ENCODE measurements at regions of chr4 and their contacts with region 1.

Region 1: DNA sequence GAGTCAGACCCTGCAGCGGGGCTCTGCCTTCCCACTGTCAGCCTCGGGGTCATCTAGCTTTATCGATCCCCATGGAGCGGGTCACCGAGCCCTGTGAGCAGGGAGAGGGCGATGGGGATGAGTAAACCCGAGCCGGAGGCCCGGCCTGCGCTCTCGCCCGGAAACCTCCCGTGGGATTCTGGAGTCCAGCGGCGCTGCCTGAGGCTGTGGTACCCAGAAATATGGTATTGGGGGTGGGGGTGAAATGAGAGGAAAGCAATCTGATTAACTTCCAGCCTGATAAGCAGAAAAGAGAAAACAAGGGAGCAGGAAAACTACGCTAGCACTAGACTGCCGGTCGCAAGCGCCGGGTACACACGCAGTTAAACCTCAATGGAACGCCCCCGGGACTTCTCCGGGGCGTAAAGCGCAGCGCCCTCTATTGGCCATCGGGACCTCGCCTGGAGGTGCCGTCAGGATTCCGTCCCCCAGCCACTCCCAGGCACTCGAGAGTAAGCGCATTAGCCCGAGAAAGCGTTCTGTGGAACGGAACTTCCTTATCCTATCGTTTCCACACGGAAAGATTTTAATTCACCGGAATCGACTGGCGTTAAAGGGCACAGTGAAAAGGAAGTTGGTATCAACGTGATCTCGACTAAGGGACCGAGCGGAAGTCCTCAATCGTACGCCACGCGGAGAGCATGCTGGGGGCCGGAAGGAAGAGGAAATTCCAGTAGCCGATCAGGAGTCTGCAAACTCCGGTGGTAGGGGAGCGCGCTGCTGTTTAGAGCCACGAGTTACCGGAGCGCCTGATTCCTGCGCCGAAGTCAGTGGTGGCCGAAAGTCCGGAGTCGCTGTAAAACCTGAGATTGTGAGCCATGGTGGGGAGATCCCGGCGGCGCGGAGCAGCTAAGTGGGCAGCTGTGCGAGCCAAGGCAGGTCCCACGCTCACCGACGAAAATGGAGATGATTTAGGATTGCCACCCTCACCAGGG is at the start of gene UTP3:
- DNase-seq: peak; percentile 97
- H3K4me3 Mint-ChIP-seq: peak within 1 kb of the TSS; percentile 99
- H3K27ac Mint-ChIP-seq: peak within 1 kb of the TSS; percentile 96
- H3K4me1 Mint-ChIP-seq: peaks cover 28% of the 10 kb centered on the region
- H3K27me3 Mint-ChIP-seq: peaks cover 1% of the 10 kb centered on the region
- total RNA-seq, gene UTP3: 45.9 and 47.6 TPM in 2 replicates

Region 2: GRCh38 chr4:70591955-70592582 is 96.0 kb before region 1 on chr4 and contains the start of gene AMBN:
- intact Hi-C with region 1: no loop called
- DNase-seq: no peak
- H3K4me3 Mint-ChIP-seq: no peak within 1 kb of the TSS
- H3K27ac Mint-ChIP-seq: no peak within 1 kb of the TSS
- H3K4me1 Mint-ChIP-seq: no peaks in the 10 kb centered on the region
- H3K27me3 Mint-ChIP-seq: no peaks in the 10 kb centered on the region
- total RNA-seq, gene AMBN: not detected in 2 replicates

Region 3: DNA sequence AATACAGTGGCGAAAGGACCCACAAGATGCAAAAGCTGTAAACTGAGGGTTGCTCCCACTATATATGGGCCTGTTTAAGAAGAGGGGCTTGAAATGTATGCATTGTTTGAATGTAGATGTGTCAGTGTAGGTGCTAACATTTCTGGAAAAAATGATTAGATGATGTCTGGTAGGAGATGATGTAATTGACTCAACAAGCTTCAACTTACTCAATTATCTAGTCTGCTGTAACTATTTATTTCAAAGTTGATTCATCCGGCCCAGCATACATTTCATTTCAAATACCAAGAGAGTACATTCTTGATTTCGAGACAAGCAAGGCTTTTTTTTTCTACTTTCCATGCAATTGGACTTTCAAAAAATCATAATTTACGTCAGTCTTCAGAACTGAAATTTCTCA is 68.8 kb before region 1 on chr4:
- intact Hi-C with region 1: loop called (anchors 2 kb)
- DNase-seq: peak; percentile 61
- H3K4me3 Mint-ChIP-seq: no peak overlapping the region
- H3K27ac Mint-ChIP-seq: no peak overlapping the region
- H3K4me1 Mint-ChIP-seq: no peaks in the 10 kb centered on the region
- H3K27me3 Mint-ChIP-seq: peaks cover 5% of the 10 kb centered on the region

Region 4: DNA sequence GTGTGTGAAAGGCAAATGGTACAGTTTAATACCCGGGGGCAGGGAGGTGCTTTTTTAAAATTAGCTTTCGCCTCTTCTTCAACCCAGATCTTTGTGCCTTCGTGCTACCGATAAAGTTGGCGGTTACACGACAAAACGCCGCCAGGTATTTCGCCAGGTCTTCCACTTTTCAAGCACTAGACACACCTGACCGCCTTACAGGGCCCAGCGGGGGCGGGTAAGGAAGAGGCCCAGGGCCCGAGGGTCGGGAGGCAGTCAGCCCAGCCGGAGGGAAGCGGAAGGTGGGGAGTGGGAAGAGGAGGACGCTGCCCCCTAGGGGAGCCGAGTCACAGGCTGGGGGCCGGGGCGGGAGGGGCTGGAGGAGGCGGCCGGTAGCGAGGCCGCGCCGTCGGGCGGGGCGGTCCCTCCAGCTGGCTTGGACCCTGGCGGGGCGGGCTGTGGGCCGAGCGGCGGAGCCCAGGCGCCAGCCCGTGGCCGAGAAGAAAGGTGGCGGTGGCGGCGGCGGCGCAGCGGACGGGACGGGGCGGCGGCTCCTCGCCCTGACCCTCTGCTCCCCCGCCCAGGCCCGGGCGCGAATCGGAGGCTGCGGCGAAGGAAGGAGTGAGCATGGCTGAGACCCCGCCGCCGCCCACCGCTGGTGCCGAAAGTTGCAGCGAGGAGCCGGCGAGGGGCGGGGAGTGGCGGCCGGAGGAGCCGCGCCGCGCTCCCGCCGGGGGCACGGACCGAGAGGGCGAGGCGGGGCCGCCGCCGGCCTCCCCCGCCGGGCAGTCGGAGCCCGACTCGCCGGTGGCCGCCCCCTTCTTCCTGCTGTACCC is 16.4 kb after region 1 on chr4:
- intact Hi-C with region 1: loop called (anchors 1 kb)
- DNase-seq: peak; percentile 84
- H3K4me3 Mint-ChIP-seq: peak overlapping the region; percentile 87
- H3K27ac Mint-ChIP-seq: peak overlapping the region; percentile 91
- H3K4me1 Mint-ChIP-seq: peaks cover 24% of the 10 kb centered on the region
- H3K27me3 Mint-ChIP-seq: no peaks in the 10 kb centered on the region

Region 5: GRCh38 chr4:70801265-70801809 is 113.2 kb after region 1 on chr4:
- intact Hi-C with region 1: loop called (anchors 1 kb)
- DNase-seq: peak; percentile 65
- H3K4me3 Mint-ChIP-seq: peak overlapping the region; percentile 21
- H3K27ac Mint-ChIP-seq: peak overlapping the region; percentile 74
- H3K4me1 Mint-ChIP-seq: peaks cover 16% of the 10 kb centered on the region
- H3K27me3 Mint-ChIP-seq: no peaks in the 10 kb centered on the region

Region 6: DNA sequence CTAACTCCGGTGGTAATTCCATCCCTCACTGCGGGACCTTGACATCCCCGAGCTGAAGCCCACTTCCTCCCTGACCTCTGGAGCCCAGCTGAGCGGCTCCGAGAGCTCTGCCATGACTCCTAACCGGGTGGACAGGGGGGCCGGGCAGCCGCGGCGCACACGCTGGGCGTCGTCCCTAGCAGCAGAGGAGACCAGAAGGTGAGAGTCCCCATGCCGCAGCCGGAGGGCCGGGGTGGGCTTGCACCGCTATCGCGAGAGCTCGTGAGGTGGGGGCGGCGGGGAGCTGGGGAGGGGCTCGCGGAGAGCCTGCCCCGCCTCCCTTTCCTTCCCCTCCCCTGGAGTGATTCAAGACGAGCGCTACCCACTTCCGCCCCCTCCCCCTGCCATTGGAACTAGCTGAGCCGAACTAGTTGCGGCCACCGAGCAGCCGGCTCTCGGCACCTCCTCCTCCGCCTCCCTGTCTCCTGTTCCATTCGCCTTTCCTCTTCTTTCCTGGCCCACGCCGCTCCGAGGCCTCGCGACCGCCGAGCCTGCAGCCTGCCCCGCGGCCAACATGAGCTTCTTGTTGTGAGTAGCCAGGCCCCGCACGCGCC is 214.0 kb after region 1 on chr4 and contains the start of gene MOB1B:
- intact Hi-C with region 1: loop called (anchors 1 kb)
- DNase-seq: peak; percentile 95
- H3K4me3 Mint-ChIP-seq: peak within 1 kb of the TSS; percentile 98
- H3K27ac Mint-ChIP-seq: peak within 1 kb of the TSS; percentile 92
- H3K4me1 Mint-ChIP-seq: peaks cover 18% of the 10 kb centered on the region
- H3K27me3 Mint-ChIP-seq: no peaks in the 10 kb centered on the region
- total RNA-seq, gene MOB1B: 23.1 and 24.1 TPM in 2 replicates

Region 7: GRCh38 chr4:71004281-71004851 is 316.3 kb after region 1 on chr4:
- intact Hi-C with region 1: loop called (anchors 1 kb)
- DNase-seq: peak; percentile 87
- H3K4me3 Mint-ChIP-seq: peak overlapping the region; percentile 73
- H3K27ac Mint-ChIP-seq: peak overlapping the region; percentile 82
- H3K4me1 Mint-ChIP-seq: peaks cover 84% of the 10 kb centered on the region
- H3K27me3 Mint-ChIP-seq: no peaks in the 10 kb centered on the region

Measured in activated CD4-positive, alpha-beta T cell treated with anti-CD3 and anti-CD28 coated beads, Interleukin-2, amount 10 ng/mL, durations not matched to agents 24 days and 14 days (primary cell).